ENCODE measurements at regions of chr5 and their contacts with region 1.

Region 1: GRCh38 chr5:10374046-10375022 is 20.8 kb downstream of the MARCHF6 start:
- DNase-seq: no peak
- ATAC-seq: no peak
- H3K4me3 ChIP-seq: no peak overlapping the region
- H3K27ac ChIP-seq: no peak overlapping the region
- H3K4me1 ChIP-seq: peaks cover 0 to 5% of the 10 kb centered on the region in 2 experiments; a peak in 3 of 5 replicates
- H3K27me3 ChIP-seq: no peaks in the 10 kb centered on the region
- CTCF ChIP-seq: no peak
- EP300 ChIP-seq: no peak
- POLR2A ChIP-seq: no peak
- RAD21 ChIP-seq: no peak

Region 2: DNA sequence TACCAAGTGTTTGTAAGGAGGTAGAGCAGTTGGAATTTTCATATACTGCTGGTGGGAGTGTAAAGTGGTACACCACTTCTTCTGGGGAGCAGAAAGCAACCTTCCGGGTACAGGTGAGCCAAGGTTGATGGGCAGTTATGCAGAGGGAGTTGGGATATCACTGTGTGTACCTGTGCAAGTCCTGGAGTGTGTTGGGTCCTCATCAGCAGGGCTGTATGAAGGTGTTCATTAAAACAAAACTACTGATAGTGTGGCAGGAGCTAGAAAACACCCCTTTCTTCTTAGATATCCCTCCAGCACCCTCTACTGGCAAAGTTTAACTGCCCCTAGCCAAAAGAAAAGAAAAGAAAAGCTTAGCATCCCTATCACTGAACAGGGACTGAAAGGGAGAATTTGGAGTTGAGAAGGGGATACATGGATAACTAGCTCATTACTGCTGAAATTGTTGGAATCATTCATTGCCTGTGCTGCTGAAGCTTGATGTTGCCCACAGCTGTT is 10.1 kb before region 1 on chr5:
- CTCF ChIA-PET with region 1: no interaction called
- POLR2A ChIA-PET with region 1: interaction called, 14 read pairs
- in situ Hi-C with region 1: no loop called
- intact Hi-C with region 1: no loop called
- DNase-seq: peak in 3 of 4 experiments; percentile 39 to 70 (median 60)
- ATAC-seq: peak; percentile 69
- H3K4me3 ChIP-seq: no peak overlapping the region
- H3K27ac ChIP-seq: no peak overlapping the region
- H3K4me1 ChIP-seq: peaks cover 17 to 19% of the 10 kb centered on the region in 2 experiments; a peak in 4 of 5 replicates
- H3K27me3 ChIP-seq: no peaks in the 10 kb centered on the region
- CTCF ChIP-seq: peak; percentile 68 to 84 (median 78)
- EP300 ChIP-seq: no peak
- POLR2A ChIP-seq: no peak
- RAD21 ChIP-seq: peak; percentile 65 to 85

Region 3: GRCh38 chr5:10775646-10776045 is 401.3 kb after region 1 on chr5:
- CTCF ChIA-PET with region 1: no interaction called
- POLR2A ChIA-PET with region 1: no interaction called
- in situ Hi-C with region 1: no loop called
- intact Hi-C with region 1: no loop called
- DNase-seq: no peak
- ATAC-seq: peak; percentile 70
- H3K4me3 ChIP-seq: no peak overlapping the region
- H3K27ac ChIP-seq: no peak overlapping the region
- H3K4me1 ChIP-seq: peaks cover 3 to 5% of the 10 kb centered on the region in 2 experiments; a peak in 2 of 5 replicates
- H3K27me3 ChIP-seq: no peaks in the 10 kb centered on the region; a peak in 1 of 5 replicates
- CTCF ChIP-seq: peak; percentile 40 to 55 (median 47); a peak in 4 of 6 replicates
- EP300 ChIP-seq: no peak
- POLR2A ChIP-seq: no peak
- RAD21 ChIP-seq: peak in 1 of 2 experiments; percentile 51; a peak in 2 of 4 replicates

Measured in K562 (cell line).